ENCODE measurements at regions of chr12 and their contacts with region 1.

Region 1: GRCh38 chr12:1795785-1796514 is 24.4 kb upstream of the LRTM2 start:
- DNase-seq: peak; percentile 90 to 96
- H3K4me3 ChIP-seq: peak overlapping the region; percentile 52 to 66
- H3K27ac ChIP-seq: peak overlapping the region; percentile 54 to 75
- H3K4me1 ChIP-seq: peaks cover 0 to 23% (median 19%) of the 10 kb centered on the region in 4 donors
- H3K27me3 ChIP-seq: no peaks in the 10 kb centered on the region
- CTCF ChIP-seq: peak; percentile 90 to 100

Region 2: GRCh38 chr12:1634590-1635191 is 161.3 kb before region 1 on chr12:
- intact Hi-C with region 1: loop called (anchors 5 kb)
- DNase-seq: peak; percentile 79 to 86
- H3K4me3 ChIP-seq: no peak overlapping the region
- H3K27ac ChIP-seq: no peak overlapping the region
- H3K4me1 ChIP-seq: peaks cover 0 to 20% (median 16%) of the 10 kb centered on the region in 4 donors
- H3K27me3 ChIP-seq: peaks cover 0 to 2% of the 10 kb centered on the region in 2 donors
- CTCF ChIP-seq: peak; percentile 72 to 80

Region 3: GRCh38 chr12:1650260-1650977 is 145.5 kb before region 1 on chr12:
- intact Hi-C with region 1: loop called (anchors 2 kb)
- DNase-seq: no peak
- H3K4me3 ChIP-seq: no peak overlapping the region
- H3K27ac ChIP-seq: peak overlapping the region; percentile 43 to 59
- H3K4me1 ChIP-seq: peaks cover 0 to 23% (median 10%) of the 10 kb centered on the region in 4 donors
- H3K27me3 ChIP-seq: no peaks in the 10 kb centered on the region
- CTCF ChIP-seq: no peak

Region 4: GRCh38 chr12:1855241-1855640 is 59.3 kb after region 1 on chr12:
- intact Hi-C with region 1: no loop called
- DNase-seq: no peak
- H3K4me3 ChIP-seq: no peak overlapping the region
- H3K27ac ChIP-seq: no peak overlapping the region
- H3K4me1 ChIP-seq: peaks cover 0 to 10% (median 4%) of the 10 kb centered on the region in 4 donors
- H3K27me3 ChIP-seq: peaks cover 0 to 6% of the 10 kb centered on the region in 2 donors
- CTCF ChIP-seq: no peak

Region 5: GRCh38 chr12:1939801-1940607 is 144.1 kb after region 1 on chr12:
- intact Hi-C with region 1: loop called (anchors 1 kb)
- DNase-seq: peak; percentile 89 to 90
- H3K4me3 ChIP-seq: no peak overlapping the region
- H3K27ac ChIP-seq: peak overlapping the region; percentile 79 to 86
- H3K4me1 ChIP-seq: peaks cover 0 to 38% (median 29%) of the 10 kb centered on the region in 4 donors
- H3K27me3 ChIP-seq: no peaks in the 10 kb centered on the region
- CTCF ChIP-seq: peak; percentile 93 to 98

Region 6: GRCh38 chr12:2034633-2035430 is 238.9 kb after region 1 on chr12:
- intact Hi-C with region 1: loop called (anchors 2 kb)
- DNase-seq: peak; percentile 76 to 92
- H3K4me3 ChIP-seq: peak overlapping the region; percentile 19 to 49
- H3K27ac ChIP-seq: peak overlapping the region in 1 of 2 donors; percentile 2
- H3K4me1 ChIP-seq: peaks cover 0 to 23% (median 16%) of the 10 kb centered on the region in 4 donors
- H3K27me3 ChIP-seq: no peaks in the 10 kb centered on the region
- CTCF ChIP-seq: peak; percentile 94 to 97

Region 7: DNA sequence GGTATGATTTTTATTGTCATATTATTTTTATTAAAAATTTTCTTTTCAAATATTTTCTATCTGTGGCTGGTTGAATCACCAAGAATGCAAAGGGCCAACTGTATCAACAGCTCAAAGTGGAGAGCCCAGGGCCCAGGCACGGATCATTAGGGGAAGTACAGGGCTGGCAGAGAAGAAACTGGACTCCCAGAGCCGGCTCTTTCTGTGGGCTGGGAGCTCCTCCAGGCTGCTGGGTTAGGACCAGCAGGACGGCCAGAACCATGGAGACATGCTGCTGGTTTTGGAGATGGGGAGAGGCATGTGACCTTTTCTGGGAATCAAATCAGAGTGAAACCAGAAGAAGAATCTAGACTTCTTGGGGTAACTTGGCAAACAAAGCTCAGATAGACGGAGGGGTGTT is 477.3 kb after region 1 on chr12:
- intact Hi-C with region 1: loop called (anchors 10 kb)
- DNase-seq: peak; percentile 72 to 90
- H3K4me3 ChIP-seq: no peak overlapping the region
- H3K27ac ChIP-seq: peak overlapping the region; percentile 66 to 69
- H3K4me1 ChIP-seq: peaks cover 0 to 53% (median 18%) of the 10 kb centered on the region in 4 donors
- H3K27me3 ChIP-seq: no peaks in the 10 kb centered on the region
- CTCF ChIP-seq: peak; percentile 46 to 61